Activated CD8-positive, alpha-beta T cell treated with anti-CD3 and anti-CD28 coated beads, Interleukin-2, amount 10 ng/mL, durations not matched to agents 7 days and 5 days (primary cell): ENCODE measurements at regions of chr1 and their contacts with region 1.

Region 1: DNA sequence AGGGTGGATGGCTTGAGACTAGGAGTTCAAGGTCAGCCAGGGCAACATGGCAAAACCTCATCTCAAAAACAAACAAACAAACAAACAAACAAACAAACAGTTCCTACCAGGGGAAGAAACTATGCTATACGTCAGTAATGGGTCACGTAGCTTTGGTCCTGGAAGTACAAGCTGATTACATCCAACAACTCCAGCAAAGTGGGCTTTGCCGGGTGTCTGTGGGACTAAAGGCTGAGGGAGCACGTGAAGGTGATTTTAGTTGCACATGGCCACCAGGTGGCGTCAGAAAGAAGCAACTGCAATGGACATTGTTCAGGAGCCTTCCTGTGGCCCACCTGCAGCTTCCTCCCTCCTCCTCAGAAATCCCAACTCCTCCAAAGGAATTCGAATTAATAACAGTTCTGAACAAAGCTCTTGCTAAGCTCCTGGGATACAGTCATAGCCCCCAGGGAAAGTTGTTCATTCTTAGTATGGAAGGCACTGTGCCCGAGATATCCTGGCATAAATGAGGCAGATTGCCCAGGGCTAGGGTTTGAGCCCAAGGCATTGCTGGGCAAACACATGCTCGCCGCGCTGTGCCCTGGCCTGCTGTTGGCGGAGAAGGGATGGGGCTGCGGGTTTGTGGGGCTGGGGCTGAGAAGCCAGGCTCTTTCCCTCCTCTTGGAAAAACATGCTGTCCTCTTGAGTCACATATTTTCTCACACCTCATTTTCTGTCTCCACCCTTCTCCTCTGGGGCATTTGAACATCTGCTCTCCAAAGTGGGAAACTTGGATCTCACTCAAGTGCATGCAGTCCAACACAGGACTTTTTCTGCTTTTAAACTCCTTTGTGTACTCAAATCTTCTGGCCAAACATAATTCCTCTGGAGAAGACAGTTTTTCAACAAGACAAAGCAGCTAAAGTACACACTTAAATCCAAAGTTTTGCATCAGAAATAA is 28.6 kb downstream of the AKNAD1 start:
- DNase-seq: peak; percentile 82
- ATAC-seq: peak; percentile 87
- H3K4me3 Mint-ChIP-seq: no peak overlapping the region
- H3K27ac Mint-ChIP-seq: no peak overlapping the region
- H3K4me1 Mint-ChIP-seq: peaks cover 11% of the 10 kb centered on the region
- H3K27me3 Mint-ChIP-seq: peaks cover 3% of the 10 kb centered on the region

Region 2: DNA sequence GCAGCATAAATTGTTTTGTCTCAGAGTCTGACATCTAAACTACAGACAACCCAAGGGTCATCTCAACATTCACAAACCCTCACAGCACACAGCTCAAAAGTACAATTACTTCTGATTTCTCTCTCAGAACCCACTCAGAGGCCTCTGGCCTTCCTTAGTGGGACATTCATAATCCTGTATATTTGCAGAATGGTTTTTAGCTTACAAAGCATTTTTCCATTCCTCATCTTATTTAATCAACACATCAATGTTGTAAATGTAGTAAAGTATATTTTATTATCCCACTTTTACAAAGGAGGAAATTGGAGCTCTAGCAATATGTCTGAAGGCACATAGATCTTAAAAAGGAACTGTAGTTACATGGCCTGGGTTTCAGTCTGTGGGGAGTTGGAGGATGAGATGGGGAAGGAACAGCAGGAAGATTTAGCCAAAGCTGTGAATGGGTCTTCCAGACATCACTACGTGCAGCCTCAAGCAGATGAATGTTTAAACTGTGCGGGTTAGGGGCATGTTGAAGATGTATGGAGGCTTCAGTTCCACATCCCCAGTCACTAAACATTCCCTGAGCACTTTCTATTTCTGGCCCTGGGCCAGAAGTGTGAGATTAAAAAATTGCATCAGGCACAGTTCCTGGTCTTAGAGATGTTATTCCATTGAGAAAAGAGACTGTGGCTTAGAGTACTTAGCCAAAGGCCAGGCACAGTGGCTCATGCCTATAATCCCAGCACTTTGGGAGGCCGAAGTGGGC is 15.3 kb after region 1 on chr1:
- CTCF ChIA-PET with region 1: interaction called, 13 read pairs
- POLR2A ChIA-PET with region 1: no interaction called
- DNase-seq: no peak
- ATAC-seq: no peak
- H3K4me3 Mint-ChIP-seq: no peak overlapping the region
- H3K27ac Mint-ChIP-seq: no peak overlapping the region
- H3K4me1 Mint-ChIP-seq: no peaks in the 10 kb centered on the region
- H3K27me3 Mint-ChIP-seq: peaks cover 21% of the 10 kb centered on the region

Region 3: DNA sequence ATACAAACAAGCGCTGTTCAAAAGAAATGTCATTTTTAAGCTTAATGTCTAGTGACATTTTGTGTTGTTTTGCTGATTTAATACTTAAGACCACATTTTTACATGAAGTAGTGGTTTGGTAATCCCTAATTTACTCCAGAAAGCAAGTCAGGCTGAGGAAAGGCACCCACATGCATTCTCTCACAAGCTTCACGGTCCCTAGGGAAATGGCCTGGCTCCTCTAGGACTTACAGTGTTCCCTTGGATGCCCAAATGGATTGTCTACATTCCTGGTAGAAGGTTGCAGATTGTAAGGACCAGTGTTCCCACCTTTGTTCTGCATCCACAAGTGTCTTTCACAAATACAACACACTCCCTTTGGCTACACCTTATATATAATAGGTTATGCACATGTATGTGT is 58.0 kb after region 1 on chr1:
- CTCF ChIA-PET with region 1: interaction called, 11 read pairs
- POLR2A ChIA-PET with region 1: no interaction called
- DNase-seq: no peak
- ATAC-seq: no peak
- H3K4me3 Mint-ChIP-seq: no peak overlapping the region
- H3K27ac Mint-ChIP-seq: no peak overlapping the region
- H3K4me1 Mint-ChIP-seq: peaks cover 2% of the 10 kb centered on the region
- H3K27me3 Mint-ChIP-seq: no peaks in the 10 kb centered on the region

Region 4: GRCh38 chr1:108897865-108898720 is 69.8 kb after region 1 on chr1:
- CTCF ChIA-PET with region 1: interaction called, 186 read pairs
- POLR2A ChIA-PET with region 1: interaction called, 3 read pairs
- DNase-seq: peak; percentile 59
- ATAC-seq: peak; percentile 76
- H3K4me3 Mint-ChIP-seq: no peak overlapping the region
- H3K27ac Mint-ChIP-seq: no peak overlapping the region
- H3K4me1 Mint-ChIP-seq: peaks cover 2% of the 10 kb centered on the region
- H3K27me3 Mint-ChIP-seq: no peaks in the 10 kb centered on the region

Region 5: DNA sequence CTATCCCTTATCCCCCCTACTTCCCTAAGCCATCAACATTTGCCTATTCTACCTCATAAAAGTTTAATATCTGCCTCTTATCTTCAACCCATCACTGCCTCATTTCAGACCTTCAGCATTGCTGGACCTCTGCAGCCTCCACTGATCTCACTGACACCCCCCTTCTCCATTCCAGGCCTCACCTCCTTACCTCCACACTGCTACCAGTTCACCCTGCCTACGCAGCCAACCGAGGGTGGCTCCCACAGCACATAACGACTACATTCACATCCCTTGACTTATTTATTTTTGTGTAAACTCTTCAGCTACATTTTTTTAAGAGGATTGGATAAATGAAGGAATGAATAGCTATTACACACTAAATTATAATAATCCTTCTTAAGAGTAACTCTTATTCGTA is 120.8 kb after region 1 on chr1:
- CTCF ChIA-PET with region 1: no interaction called
- POLR2A ChIA-PET with region 1: no interaction called
- DNase-seq: no peak
- ATAC-seq: no peak
- H3K4me3 Mint-ChIP-seq: no peak overlapping the region
- H3K27ac Mint-ChIP-seq: no peak overlapping the region
- H3K4me1 Mint-ChIP-seq: peaks cover 7% of the 10 kb centered on the region
- H3K27me3 Mint-ChIP-seq: no peaks in the 10 kb centered on the region